ENCODE measurements at regions of chr9 and their contacts with region 1.

Region 1: DNA sequence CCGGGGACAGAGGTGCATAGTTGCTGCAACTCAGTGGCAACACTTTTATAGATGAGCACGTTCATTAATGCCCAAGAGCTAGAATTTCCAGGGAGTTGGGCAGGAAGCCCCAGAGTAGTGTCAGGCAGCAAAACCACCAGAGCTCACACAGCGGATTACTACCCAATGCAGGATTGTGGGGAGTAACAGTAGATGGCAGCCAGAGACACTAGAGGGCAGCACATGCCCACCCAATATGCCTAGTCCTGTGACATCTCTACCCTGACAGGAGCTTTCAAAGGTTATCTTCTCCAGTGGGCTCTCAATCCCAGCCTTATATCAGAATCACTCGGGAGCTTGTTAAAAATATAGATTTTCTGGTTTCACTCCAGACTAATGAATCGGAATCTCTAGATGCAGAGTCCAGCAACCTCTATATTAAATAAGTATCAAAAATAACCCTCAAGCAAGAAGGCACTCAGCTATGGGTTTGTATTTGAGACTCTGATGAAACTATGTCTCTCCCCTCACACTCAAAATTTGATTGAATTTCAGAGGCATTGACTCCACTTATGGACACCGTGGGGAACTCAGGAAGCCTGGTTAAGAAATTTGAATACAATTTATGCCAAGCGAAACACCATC is 58.4 kb upstream of the PHF24 start:
- DNase-seq: peak; percentile 91
- H3K4me3 Mint-ChIP-seq: no peak overlapping the region
- H3K27ac Mint-ChIP-seq: no peak overlapping the region
- H3K4me1 Mint-ChIP-seq: no peaks in the 10 kb centered on the region
- H3K27me3 Mint-ChIP-seq: peaks cover 22% of the 10 kb centered on the region

Region 2: GRCh38 chr9:34777666-34778065 is 122.0 kb before region 1 on chr9:
- CTCF ChIA-PET with region 1: no interaction called
- intact Hi-C with region 1: no loop called
- DNase-seq: no peak
- H3K4me3 Mint-ChIP-seq: no peak overlapping the region
- H3K27ac Mint-ChIP-seq: no peak overlapping the region
- H3K4me1 Mint-ChIP-seq: no peaks in the 10 kb centered on the region
- H3K27me3 Mint-ChIP-seq: peaks cover 9% of the 10 kb centered on the region

Region 3: DNA sequence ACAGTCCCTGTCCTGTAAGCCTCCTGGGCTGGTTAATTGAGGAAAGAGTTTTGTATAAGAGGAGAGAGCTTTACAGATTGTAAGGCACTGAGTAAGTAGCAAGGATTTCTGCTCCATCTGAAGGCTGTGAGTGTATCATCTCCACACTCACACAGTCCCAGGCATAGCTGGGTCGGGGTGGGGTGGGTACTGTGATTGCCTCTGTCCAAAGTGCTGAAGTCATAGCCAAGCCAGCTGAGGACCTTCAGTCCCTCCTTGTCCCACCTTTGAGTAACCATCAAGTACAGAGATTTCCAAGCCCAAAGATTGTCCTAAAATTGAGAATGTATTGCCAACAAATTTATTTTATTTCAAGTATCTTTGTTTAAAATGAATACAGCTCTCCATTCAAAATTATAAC is 84.4 kb after region 1 on chr9:
- CTCF ChIA-PET with region 1: interaction called, 44 read pairs
- intact Hi-C with region 1: loop called (anchors 1 kb)
- DNase-seq: peak; percentile 64
- H3K4me3 Mint-ChIP-seq: no peak overlapping the region
- H3K27ac Mint-ChIP-seq: no peak overlapping the region
- H3K4me1 Mint-ChIP-seq: peaks cover 69% of the 10 kb centered on the region
- H3K27me3 Mint-ChIP-seq: no peaks in the 10 kb centered on the region

Region 4: GRCh38 chr9:35001803-35002502 is 102.3 kb after region 1 on chr9:
- CTCF ChIA-PET with region 1: interaction called, 14 read pairs
- intact Hi-C with region 1: no loop called
- DNase-seq: peak; percentile 70
- H3K4me3 Mint-ChIP-seq: no peak overlapping the region
- H3K27ac Mint-ChIP-seq: peak overlapping the region; percentile 83
- H3K4me1 Mint-ChIP-seq: peaks cover 35% of the 10 kb centered on the region
- H3K27me3 Mint-ChIP-seq: no peaks in the 10 kb centered on the region

Region 5: GRCh38 chr9:35051069-35051967 is 151.7 kb after region 1 on chr9:
- CTCF ChIA-PET with region 1: interaction called, 65 read pairs
- intact Hi-C with region 1: loop called (anchors 1 kb)
- DNase-seq: peak; percentile 71
- H3K4me3 Mint-ChIP-seq: no peak overlapping the region
- H3K27ac Mint-ChIP-seq: no peak overlapping the region
- H3K4me1 Mint-ChIP-seq: no peaks in the 10 kb centered on the region
- H3K27me3 Mint-ChIP-seq: no peaks in the 10 kb centered on the region

Region 6: DNA sequence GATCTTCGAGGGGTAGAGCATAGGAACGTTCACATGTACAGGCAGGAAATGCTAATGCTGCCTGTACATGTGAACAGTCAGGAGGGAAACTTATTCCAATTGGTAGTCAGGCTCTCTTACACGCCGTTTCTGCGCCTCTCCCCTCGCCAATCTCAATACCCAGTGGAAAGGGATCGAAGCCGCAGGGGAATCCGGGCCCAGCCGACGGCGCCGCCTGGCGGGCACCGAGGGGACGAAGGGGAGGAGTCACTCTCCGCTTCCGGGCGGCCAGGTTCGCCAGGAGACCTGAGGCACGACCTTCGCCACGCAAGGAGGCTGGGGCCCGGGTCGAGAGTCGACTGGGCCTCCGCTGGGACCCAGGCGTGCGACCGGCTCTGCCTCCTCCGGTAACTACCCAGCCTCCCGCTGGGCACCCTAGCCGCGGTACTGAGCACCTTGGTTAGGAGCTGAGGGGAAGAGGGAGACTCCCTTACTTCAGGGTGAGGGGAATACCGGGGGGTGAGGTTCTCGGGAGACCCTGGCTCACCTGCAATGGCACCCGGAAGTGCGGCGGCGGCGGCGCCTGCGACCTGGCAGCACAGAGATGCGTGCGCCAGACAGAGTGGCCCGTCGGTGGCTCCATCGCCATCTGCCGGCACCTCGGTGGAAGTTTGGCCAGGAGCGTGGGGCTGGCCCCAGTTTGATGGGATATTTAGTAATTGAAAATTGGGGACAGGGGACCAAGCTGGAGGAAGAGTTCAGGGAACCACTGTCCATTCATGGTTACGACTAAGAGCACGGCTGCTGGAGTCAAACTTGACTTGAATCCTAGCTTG is 196.6 kb after region 1 on chr9 and contains the start of gene PIGO:
- CTCF ChIA-PET with region 1: interaction called, 31 read pairs
- intact Hi-C with region 1: loop called (anchors 1 kb)
- DNase-seq: peak; percentile 92
- H3K4me3 Mint-ChIP-seq: peak within 1 kb of the TSS; percentile 83
- H3K27ac Mint-ChIP-seq: peak within 1 kb of the TSS; percentile 91
- H3K4me1 Mint-ChIP-seq: peaks cover 37% of the 10 kb centered on the region
- H3K27me3 Mint-ChIP-seq: no peaks in the 10 kb centered on the region
- total RNA-seq, gene PIGO: 22.8 to 23.7 TPM

Region 7: GRCh38 chr9:35481347-35481975 is 581.8 kb after region 1 on chr9:
- CTCF ChIA-PET with region 1: interaction called, 5 read pairs
- intact Hi-C with region 1: loop called (anchors 1 kb)
- DNase-seq: peak; percentile 57
- H3K4me3 Mint-ChIP-seq: no peak overlapping the region
- H3K27ac Mint-ChIP-seq: no peak overlapping the region
- H3K4me1 Mint-ChIP-seq: no peaks in the 10 kb centered on the region
- H3K27me3 Mint-ChIP-seq: peaks cover 6% of the 10 kb centered on the region

Region 8: DNA sequence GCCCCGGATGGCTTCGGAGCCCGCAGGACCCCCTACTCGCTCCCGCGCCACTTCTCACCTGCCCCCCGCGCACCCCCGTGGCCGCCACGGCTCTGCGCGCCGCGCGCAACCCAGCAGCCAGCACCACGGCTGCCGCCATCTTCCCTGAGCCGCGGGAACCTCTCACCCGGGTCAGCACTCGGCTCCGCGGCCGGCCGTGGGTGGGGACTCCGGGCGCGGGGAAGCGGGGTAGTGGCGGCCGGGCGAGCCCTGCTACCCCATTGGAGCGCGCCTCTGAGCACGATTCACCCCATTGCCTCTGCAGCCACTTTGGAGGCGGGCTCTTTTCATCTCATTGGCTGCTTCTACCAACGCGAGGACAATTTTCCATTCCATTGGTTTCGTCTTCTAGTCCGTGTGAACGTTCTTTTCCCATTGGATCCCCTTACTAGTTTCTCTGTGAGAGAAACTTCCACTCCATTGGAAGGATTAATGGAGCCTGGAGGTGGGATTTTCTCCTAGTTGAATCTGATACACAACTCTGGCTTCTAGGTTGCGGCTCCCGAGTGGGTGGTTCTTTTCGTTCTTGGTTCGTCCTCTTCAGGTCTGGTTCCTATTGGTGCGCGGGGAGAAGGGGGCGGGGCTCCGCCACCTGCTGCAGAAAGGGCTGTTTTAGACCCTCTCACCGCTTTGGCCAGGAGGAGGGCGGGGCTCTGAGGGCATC is 915.3 kb after region 1 on chr9 and contains the start of gene HINT2:
- CTCF ChIA-PET with region 1: no interaction called
- intact Hi-C with region 1: no loop called
- DNase-seq: peak; percentile 98
- H3K4me3 Mint-ChIP-seq: peak within 1 kb of the TSS; percentile 92
- H3K27ac Mint-ChIP-seq: peak within 1 kb of the TSS; percentile 97
- H3K4me1 Mint-ChIP-seq: peaks cover 28% of the 10 kb centered on the region
- H3K27me3 Mint-ChIP-seq: no peaks in the 10 kb centered on the region
- total RNA-seq, gene HINT2: 61.0 to 68.3 TPM

Measured in activated naive CD4-positive, alpha-beta T cell treated with anti-CD3 and anti-CD28 coated beads for 36 hours (primary cell).